Natural killer cell (primary cell): ENCODE measurements at regions of chr11 and their contacts with region 1.

Region 1: GRCh38 chr11:84003181-84003580 is 717.0 kb upstream of the CCDC90B start:
- DNase-seq: no peak
- ATAC-seq: no peak
- H3K4me3 ChIP-seq: no peak overlapping the region
- H3K4me3 Mint-ChIP-seq: no peak overlapping the region
- H3K27ac ChIP-seq: no peak overlapping the region
- H3K27ac Mint-ChIP-seq: no peak overlapping the region
- H3K4me1 ChIP-seq: no peaks in the 10 kb centered on the region
- H3K4me1 Mint-ChIP-seq: no peaks in the 10 kb centered on the region
- H3K27me3 ChIP-seq: no peaks in the 10 kb centered on the region
- H3K27me3 Mint-ChIP-seq: no peaks in the 10 kb centered on the region
- CTCF ChIP-seq: no peak

Region 2: DNA sequence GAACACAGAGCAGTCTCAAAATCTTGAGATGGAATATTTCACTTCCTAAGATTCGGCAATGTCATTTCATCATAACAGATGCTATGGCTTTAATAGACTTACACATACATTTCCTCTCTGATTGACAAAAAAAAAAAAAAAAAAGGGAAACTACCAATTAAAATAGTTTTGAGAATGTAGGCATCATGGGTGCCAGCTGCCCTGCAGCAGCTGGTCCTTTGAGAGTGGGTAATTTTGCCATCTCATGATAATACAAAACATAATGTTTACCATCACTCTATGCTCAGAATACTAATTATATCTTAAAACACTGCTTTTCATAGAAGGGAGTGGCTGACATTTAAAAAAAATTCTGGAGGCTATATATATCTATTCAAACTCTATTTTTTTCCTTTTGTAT is 58.5 kb after region 1 on chr11:
- intact Hi-C with region 1: loop called (anchors 10 kb)
- DNase-seq: no peak
- ATAC-seq: no peak
- H3K4me3 ChIP-seq: no peak overlapping the region
- H3K4me3 Mint-ChIP-seq: no peak overlapping the region
- H3K27ac ChIP-seq: no peak overlapping the region
- H3K27ac Mint-ChIP-seq: no peak overlapping the region
- H3K4me1 ChIP-seq: no peaks in the 10 kb centered on the region
- H3K4me1 Mint-ChIP-seq: no peaks in the 10 kb centered on the region
- H3K27me3 ChIP-seq: no peaks in the 10 kb centered on the region
- H3K27me3 Mint-ChIP-seq: no peaks in the 10 kb centered on the region
- CTCF ChIP-seq: no peak